A673 (cell line): ENCODE measurements at regions of chr9 and their contacts with region 1.

Region 1: GRCh38 chr9:70747261-70747718 is 332.8 kb upstream of the KLF9 start:
- DNase-seq: no peak
- H3K4me3 ChIP-seq: no peak overlapping the region
- H3K27ac ChIP-seq: no peak overlapping the region
- H3K4me1 ChIP-seq: peaks cover 18% of the 10 kb centered on the region
- H3K27me3 ChIP-seq: no peaks in the 10 kb centered on the region
- CTCF ChIP-seq: no peak

Region 2: DNA sequence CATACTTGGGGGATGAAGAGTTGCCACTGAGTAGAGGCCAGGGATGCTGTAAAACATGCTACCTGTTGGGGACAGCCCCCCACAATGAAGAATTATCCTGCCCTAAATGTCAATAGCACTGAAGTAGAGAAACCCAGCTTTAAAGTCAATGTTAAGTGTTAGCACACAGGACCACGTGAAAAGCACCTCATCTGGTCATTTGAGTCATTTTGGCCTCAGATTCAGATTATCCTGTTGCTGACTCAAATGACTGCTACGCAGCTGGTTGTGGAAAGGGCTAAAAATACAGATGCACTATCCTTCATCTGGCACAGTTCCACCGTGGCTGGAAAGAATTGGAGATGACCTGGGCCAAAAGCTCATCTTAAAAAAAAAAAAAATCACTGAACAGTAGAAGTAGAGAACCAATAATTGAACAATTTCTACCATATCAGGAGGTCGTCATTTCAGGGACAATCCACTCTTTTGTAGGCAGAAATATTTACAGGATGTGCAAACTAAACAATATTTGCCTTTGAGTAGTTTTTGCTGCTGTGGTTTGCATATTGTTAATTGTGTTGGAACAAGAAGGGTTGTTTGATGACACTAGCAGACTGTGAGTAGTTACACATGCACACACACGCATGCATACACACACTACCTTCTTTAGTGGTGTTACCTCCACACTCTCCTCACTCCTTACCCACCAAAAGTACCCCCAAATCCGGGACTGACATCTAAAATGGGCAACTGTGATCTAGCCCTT is 137.6 kb before region 1 on chr9:
- CTCF ChIA-PET with region 1: no interaction called
- POLR2A ChIA-PET with region 1: no interaction called
- intact Hi-C with region 1: no loop called
- DNase-seq: no peak
- H3K4me3 ChIP-seq: no peak overlapping the region
- H3K27ac ChIP-seq: no peak overlapping the region
- H3K4me1 ChIP-seq: peaks cover 4% of the 10 kb centered on the region
- H3K27me3 ChIP-seq: no peaks in the 10 kb centered on the region
- CTCF ChIP-seq: no peak

Region 3: GRCh38 chr9:70688704-70689103 is 58.6 kb before region 1 on chr9:
- CTCF ChIA-PET with region 1: no interaction called
- POLR2A ChIA-PET with region 1: no interaction called
- intact Hi-C with region 1: loop called (anchors 2 kb)
- DNase-seq: no peak
- H3K4me3 ChIP-seq: no peak overlapping the region
- H3K27ac ChIP-seq: no peak overlapping the region
- H3K4me1 ChIP-seq: no peaks in the 10 kb centered on the region
- H3K27me3 ChIP-seq: no peaks in the 10 kb centered on the region
- CTCF ChIP-seq: no peak